ENCODE measurements at regions of chr10 and their contacts with region 1.

Region 1: GRCh38 chr10:100535715-100536353 is at the start of gene HIF1AN:
- DNase-seq: peak; percentile 96
- ATAC-seq: peak; percentile 99
- H3K4me3 ChIP-seq: peak within 1 kb of the TSS; percentile 74 to 88 (median 75)
- H3K4me3 Mint-ChIP-seq: peak within 1 kb of the TSS; percentile 42
- H3K27ac ChIP-seq: peak within 1 kb of the TSS; percentile 34 to 83
- H3K27ac Mint-ChIP-seq: peak within 1 kb of the TSS; percentile 32
- H3K4me1 ChIP-seq: peaks cover 23 to 24% of the 10 kb centered on the region in 2 donors
- H3K4me1 Mint-ChIP-seq: peaks cover 19% of the 10 kb centered on the region
- H3K27me3 ChIP-seq: no peaks in the 10 kb centered on the region
- H3K27me3 Mint-ChIP-seq: no peaks in the 10 kb centered on the region
- CTCF ChIP-seq: peak; percentile 86
- total RNA-seq, gene HIF1AN: 65.6 and 73.8 TPM in 2 replicates

Region 2: DNA sequence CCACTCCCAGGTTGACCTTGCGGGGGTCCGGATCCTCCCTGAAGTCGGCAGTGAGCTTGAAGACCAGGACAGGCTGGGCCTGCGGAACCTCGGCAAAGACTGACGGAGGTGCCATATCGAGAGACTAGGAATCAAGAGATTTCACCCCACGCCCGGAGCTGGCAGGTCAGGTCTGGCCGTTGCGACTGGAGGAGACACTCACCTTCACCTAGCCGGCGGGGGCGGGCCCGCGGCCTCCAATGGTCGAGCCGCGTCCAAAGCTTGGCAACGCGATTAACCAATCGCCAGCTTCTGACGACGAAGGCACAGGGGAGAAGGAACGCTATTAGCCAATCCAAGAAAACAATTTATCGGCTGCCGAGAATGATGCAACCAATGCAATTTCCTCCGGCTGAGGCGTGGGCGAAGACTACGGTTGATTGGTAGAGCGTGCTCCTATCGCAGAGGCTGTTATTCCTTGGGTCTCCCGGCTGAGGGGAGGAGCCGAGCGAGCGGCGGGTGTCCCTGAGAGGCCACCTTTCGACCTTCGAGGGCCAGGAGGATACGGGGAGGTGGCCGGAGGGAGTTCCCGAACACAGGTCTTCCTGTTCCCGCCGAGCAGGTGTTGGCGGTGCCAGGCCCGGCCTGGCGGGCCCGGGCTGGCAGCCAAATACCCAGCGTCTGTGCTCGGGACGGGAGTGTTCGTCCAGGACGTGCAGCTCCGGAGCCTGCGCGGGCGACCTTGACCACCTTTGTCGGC is 1105.2 kb before region 1 on chr10 and contains the start of gene GOT1:
- CTCF ChIA-PET with region 1: interaction called, 3 read pairs
- POLR2A ChIA-PET with region 1: no interaction called
- intact Hi-C with region 1: loop called (anchors 5 kb)
- DNase-seq: peak; percentile 97
- ATAC-seq: peak; percentile 89
- H3K4me3 ChIP-seq: peak within 1 kb of the TSS; percentile 72 to 87 (median 76)
- H3K4me3 Mint-ChIP-seq: peak within 1 kb of the TSS; percentile 99
- H3K27ac ChIP-seq: peak within 1 kb of the TSS; percentile 81 to 85
- H3K27ac Mint-ChIP-seq: peak within 1 kb of the TSS; percentile 96
- H3K4me1 ChIP-seq: peaks cover 13 to 21% of the 10 kb centered on the region in 2 donors
- H3K4me1 Mint-ChIP-seq: peaks cover 28% of the 10 kb centered on the region
- H3K27me3 ChIP-seq: no peaks in the 10 kb centered on the region
- H3K27me3 Mint-ChIP-seq: no peaks in the 10 kb centered on the region
- CTCF ChIP-seq: no peak
- total RNA-seq, gene GOT1: 13.8 and 14.9 TPM in 2 replicates

Region 3: DNA sequence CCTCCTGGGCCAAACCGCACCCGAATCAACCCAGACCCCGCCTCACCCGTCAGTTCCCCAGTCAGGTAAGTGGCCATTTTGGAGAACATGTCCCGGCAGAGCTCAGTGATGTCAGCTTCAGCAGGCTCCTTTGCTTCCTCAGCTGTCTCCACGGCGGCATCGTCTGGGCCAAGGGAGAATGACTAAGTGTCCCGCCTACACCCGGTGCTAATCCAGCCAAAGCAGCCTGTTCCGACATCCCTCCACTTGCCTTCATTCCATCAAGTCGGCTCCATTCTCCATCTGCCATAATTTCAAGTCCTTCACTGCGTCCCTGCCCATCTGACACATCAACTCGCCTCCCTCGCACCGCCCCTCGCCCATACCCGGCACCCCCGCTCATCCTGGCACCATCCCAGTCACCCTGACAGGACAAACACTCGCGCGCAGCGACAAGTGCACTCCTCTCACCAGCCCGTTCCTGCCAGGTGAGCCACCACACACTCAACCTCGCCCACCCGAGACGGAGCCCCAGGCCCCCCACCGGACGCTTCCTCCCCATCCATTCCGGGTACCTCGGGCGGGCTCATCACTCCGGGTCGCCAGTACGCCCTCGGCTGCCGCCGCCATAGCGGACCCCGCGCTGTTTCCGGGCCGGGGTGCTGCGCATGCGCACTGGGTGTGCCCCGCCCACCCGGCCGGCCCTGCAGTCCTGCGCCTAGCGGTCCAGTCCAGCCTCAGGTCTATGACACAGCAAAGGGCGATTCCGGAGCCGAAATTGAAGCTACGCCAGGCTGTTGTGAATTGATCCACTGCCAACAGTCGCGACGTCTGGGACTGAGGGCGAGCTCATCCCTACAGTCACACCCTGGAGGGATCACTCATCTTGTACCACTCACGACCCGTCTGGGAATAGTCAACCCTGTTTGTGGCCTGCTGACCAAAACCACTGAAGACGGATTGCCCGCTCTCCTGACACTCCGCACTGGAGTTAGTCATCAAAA is 249.5 kb before region 1 on chr10 and contains the start of gene BLOC1S2:
- CTCF ChIA-PET with region 1: interaction called, 3 read pairs
- POLR2A ChIA-PET with region 1: no interaction called
- intact Hi-C with region 1: loop called (anchors 1 kb)
- DNase-seq: peak; percentile 91
- ATAC-seq: peak; percentile 90
- H3K4me3 ChIP-seq: peak within 1 kb of the TSS; percentile 69 to 100 (median 99)
- H3K4me3 Mint-ChIP-seq: peak within 1 kb of the TSS; percentile 98
- H3K27ac ChIP-seq: peak within 1 kb of the TSS; percentile 92 to 96
- H3K27ac Mint-ChIP-seq: peak within 1 kb of the TSS; percentile 96
- H3K4me1 ChIP-seq: peaks cover 48 to 53% of the 10 kb centered on the region in 2 donors
- H3K4me1 Mint-ChIP-seq: peaks cover 35% of the 10 kb centered on the region
- H3K27me3 ChIP-seq: no peaks in the 10 kb centered on the region
- H3K27me3 Mint-ChIP-seq: peaks cover 1% of the 10 kb centered on the region
- CTCF ChIP-seq: no peak
- total RNA-seq, gene BLOC1S2: 47.2 and 47.5 TPM in 2 replicates

Region 4: GRCh38 chr10:100481462-100482081 is 54.3 kb before region 1 on chr10:
- CTCF ChIA-PET with region 1: no interaction called
- POLR2A ChIA-PET with region 1: no interaction called
- intact Hi-C with region 1: loop called (anchors 5 kb)
- DNase-seq: peak; percentile 95
- ATAC-seq: peak; percentile 99
- H3K4me3 ChIP-seq: peak overlapping the region; percentile 57 to 81 (median 64)
- H3K4me3 Mint-ChIP-seq: peak overlapping the region; percentile 85
- H3K27ac ChIP-seq: no peak overlapping the region
- H3K27ac Mint-ChIP-seq: no peak overlapping the region
- H3K4me1 ChIP-seq: peaks cover 7 to 20% of the 10 kb centered on the region in 2 donors
- H3K4me1 Mint-ChIP-seq: peaks cover 14% of the 10 kb centered on the region
- H3K27me3 ChIP-seq: peaks cover 0 to 32% (median 20%) of the 10 kb centered on the region in 4 experiments
- H3K27me3 Mint-ChIP-seq: peaks cover 31% of the 10 kb centered on the region
- CTCF ChIP-seq: no peak

Region 5: GRCh38 chr10:101797403-101798059 is 1261.7 kb after region 1 on chr10:
- CTCF ChIA-PET with region 1: no interaction called
- POLR2A ChIA-PET with region 1: interaction called, 10 read pairs
- intact Hi-C with region 1: no loop called
- DNase-seq: no peak
- ATAC-seq: no peak
- H3K4me3 ChIP-seq: no peak overlapping the region
- H3K4me3 Mint-ChIP-seq: no peak overlapping the region
- H3K27ac ChIP-seq: no peak overlapping the region
- H3K27ac Mint-ChIP-seq: no peak overlapping the region
- H3K4me1 ChIP-seq: no peaks in the 10 kb centered on the region
- H3K4me1 Mint-ChIP-seq: peaks cover 6% of the 10 kb centered on the region
- H3K27me3 ChIP-seq: no peaks in the 10 kb centered on the region
- H3K27me3 Mint-ChIP-seq: no peaks in the 10 kb centered on the region
- CTCF ChIP-seq: no peak